ENCODE measurements at regions of chr3 and their contacts with region 1.

Region 1: DNA sequence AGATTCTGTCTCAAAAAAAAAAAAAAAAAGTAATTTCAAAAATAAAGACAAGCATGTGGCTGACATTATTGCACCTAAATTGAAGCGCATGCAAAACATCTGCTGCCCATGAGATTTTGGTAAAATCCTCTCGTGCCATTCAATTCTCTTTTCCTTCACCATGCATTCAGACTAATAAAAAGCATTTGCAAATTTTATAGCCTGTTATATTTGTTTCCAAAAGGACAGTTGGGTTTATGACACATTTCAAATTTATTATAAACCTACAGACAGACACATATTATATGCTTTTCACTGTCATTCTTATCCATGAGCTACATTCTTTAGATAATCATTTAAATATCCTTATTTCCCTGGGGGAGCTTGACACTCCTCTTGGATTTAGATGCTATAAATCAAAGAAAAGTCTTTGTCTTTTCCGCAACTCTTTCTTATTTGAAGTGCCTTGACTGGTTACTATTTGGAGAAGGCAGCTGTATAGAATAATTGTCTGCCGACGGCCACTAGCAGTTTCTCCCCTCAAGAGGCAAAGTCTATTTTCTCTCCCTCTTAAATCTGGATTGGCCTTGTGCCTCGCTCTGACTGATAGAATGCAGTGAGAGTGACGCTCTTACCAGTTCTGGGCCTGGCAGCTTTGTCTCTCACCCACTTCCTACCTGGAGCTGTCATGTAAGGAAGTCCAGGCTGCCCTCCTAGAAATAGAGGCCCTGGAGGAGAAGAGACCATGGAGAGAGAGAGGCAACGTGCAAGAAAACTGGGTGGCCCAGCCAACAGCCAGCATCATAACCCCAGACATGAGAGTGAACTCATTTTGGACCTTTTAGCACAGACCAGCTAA is 6.8 kb upstream of the LRIG1 start:
- DNase-seq: no peak
- ATAC-seq: no peak
- H3K4me3 ChIP-seq: no peak overlapping the region
- H3K27ac ChIP-seq: no peak overlapping the region
- H3K4me1 ChIP-seq: no peaks in the 10 kb centered on the region
- H3K27me3 ChIP-seq: no peaks in the 10 kb centered on the region

Region 2: GRCh38 chr3:66572938-66573710 is 65.5 kb after region 1 on chr3:
- intact Hi-C with region 1: loop called in 1 of 2 experiments (anchors 5 kb)
- DNase-seq: peak in 1 of 2 donors; percentile 72
- ATAC-seq: no peak
- H3K4me3 ChIP-seq: no peak overlapping the region
- H3K27ac ChIP-seq: no peak overlapping the region
- H3K4me1 ChIP-seq: no peaks in the 10 kb centered on the region
- H3K27me3 ChIP-seq: no peaks in the 10 kb centered on the region

Region 3: GRCh38 chr3:66638717-66639116 is 131.1 kb after region 1 on chr3:
- intact Hi-C with region 1: no loop called
- DNase-seq: no peak
- ATAC-seq: no peak
- H3K4me3 ChIP-seq: no peak overlapping the region
- H3K27ac ChIP-seq: no peak overlapping the region
- H3K4me1 ChIP-seq: no peaks in the 10 kb centered on the region
- H3K27me3 ChIP-seq: no peaks in the 10 kb centered on the region

Measured in aorta (tissue), 5 donors.